Activated B cell treated with CpG ODN at 0.5 μM for 24 hours (primary cell): ENCODE measurements at regions of chr6 and their contacts with region 1.

Region 1: GRCh38 chr6:148677594-148678476 is 69.0 kb upstream of the UST start:
- DNase-seq: no peak
- ATAC-seq: peak; percentile 76
- H3K4me3 Mint-ChIP-seq: peak overlapping the region; percentile 56
- H3K27ac Mint-ChIP-seq: peak overlapping the region; percentile 86
- H3K4me1 Mint-ChIP-seq: peaks cover 67% of the 10 kb centered on the region
- H3K27me3 Mint-ChIP-seq: no peaks in the 10 kb centered on the region
- CTCF ChIP-seq: no peak

Region 2: GRCh38 chr6:148520109-148520841 is 157.6 kb before region 1 on chr6:
- CTCF ChIA-PET with region 1: no interaction called
- POLR2A ChIA-PET with region 1: no interaction called
- intact Hi-C with region 1: loop called (anchors 1 kb)
- DNase-seq: peak; percentile 68
- ATAC-seq: peak; percentile 96
- H3K4me3 Mint-ChIP-seq: peak overlapping the region; percentile 64
- H3K27ac Mint-ChIP-seq: peak overlapping the region; percentile 82
- H3K4me1 Mint-ChIP-seq: peaks cover 66% of the 10 kb centered on the region
- H3K27me3 Mint-ChIP-seq: no peaks in the 10 kb centered on the region
- CTCF ChIP-seq: no peak

Region 3: DNA sequence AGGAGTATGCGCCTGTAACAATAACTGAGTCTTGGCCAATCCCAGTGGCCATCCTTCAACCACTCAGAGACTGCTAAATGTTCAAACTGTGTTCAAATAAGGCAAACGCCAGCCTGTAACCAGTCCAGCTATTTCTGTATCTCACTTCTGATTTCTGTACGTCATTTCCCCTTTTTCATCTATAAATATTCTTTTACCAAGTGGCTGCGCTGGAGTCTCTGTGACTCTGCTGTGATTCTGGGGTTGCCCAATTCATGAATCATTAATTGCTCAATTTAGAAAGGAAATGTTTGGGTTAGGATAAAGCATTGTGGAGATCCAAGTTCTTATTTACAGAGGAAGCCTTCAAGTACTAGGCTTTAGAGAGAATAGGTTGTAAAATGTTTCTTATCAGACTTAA is 20.8 kb before region 1 on chr6:
- CTCF ChIA-PET with region 1: no interaction called
- POLR2A ChIA-PET with region 1: interaction called, 6 read pairs
- intact Hi-C with region 1: loop called (anchors 1 kb)
- DNase-seq: no peak
- ATAC-seq: peak; percentile 93
- H3K4me3 Mint-ChIP-seq: peak overlapping the region; percentile 47
- H3K27ac Mint-ChIP-seq: peak overlapping the region; percentile 86
- H3K4me1 Mint-ChIP-seq: peaks cover 19% of the 10 kb centered on the region
- H3K27me3 Mint-ChIP-seq: no peaks in the 10 kb centered on the region
- CTCF ChIP-seq: no peak

Region 4: DNA sequence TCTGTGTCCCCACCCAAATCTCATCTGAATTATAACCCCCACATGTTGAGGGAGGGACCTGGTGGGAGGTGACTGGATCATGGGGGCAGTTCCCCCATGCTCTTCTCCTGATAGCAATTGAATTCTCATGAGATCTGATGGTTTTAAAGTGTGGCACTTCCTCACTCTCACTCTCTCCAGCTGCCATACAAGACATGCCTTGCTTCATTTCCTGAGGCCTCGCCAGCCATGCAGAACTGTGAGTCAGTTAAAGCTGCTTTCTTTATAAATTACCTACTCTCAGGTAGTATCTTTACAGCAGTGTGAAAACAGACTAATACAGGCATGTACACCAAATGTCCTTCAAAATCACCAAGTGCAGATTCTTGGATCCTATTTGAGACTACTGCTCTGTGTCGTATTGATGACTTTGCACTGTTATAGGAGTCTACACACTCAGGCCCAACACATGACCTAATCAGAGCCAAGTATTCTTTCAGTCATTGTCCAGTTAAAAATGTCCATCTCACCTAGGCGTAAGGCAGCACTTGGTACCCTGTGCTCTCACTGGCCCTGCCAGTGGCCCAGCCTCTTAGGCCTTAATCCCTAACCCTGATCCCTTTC is 16.1 kb after region 1 on chr6:
- CTCF ChIA-PET with region 1: interaction called, 5 read pairs
- POLR2A ChIA-PET with region 1: interaction called, 14 read pairs
- intact Hi-C with region 1: loop called (anchors 1 kb)
- DNase-seq: peak; percentile 33
- ATAC-seq: peak; percentile 98
- H3K4me3 Mint-ChIP-seq: peak overlapping the region; percentile 62
- H3K27ac Mint-ChIP-seq: peak overlapping the region; percentile 90
- H3K4me1 Mint-ChIP-seq: peaks cover 27% of the 10 kb centered on the region
- H3K27me3 Mint-ChIP-seq: no peaks in the 10 kb centered on the region
- CTCF ChIP-seq: no peak